Sigmoid colon (tissue), 7 donors: ENCODE measurements at regions of chr1 and their contacts with region 1.

Region 1: GRCh38 chr1:155050560-155051341 is at the start of gene ADAM15:
- DNase-seq: peak; percentile 93
- H3K4me3 ChIP-seq: peak within 1 kb of the TSS; percentile 57 to 85 (median 68)
- H3K27ac ChIP-seq: peak within 1 kb of the TSS; percentile 92 to 96 (median 92)
- H3K4me1 ChIP-seq: peaks cover 0 to 33% (median 22%) of the 10 kb centered on the region in 4 donors
- H3K27me3 ChIP-seq: no peaks in the 10 kb centered on the region
- CTCF ChIP-seq: peak; percentile 88 to 94 (median 94)
- EP300 ChIP-seq: no peak
- POLR2A ChIP-seq: peak in 1 of 2 donors; percentile 62
- total RNA-seq, gene ADAM15: 42.6 to 66.7 (median 53.1) TPM

Region 2: GRCh38 chr1:155084722-155085503 is 34.2 kb after region 1 on chr1:
- intact Hi-C with region 1: loop called (anchors 2 kb)
- DNase-seq: peak; percentile 96
- H3K4me3 ChIP-seq: peak overlapping the region; percentile 44 to 73 (median 68)
- H3K27ac ChIP-seq: peak overlapping the region; percentile 86 to 94 (median 89)
- H3K4me1 ChIP-seq: peaks cover 0 to 48% (median 46%) of the 10 kb centered on the region in 4 donors
- H3K27me3 ChIP-seq: peaks cover 38 to 46% (median 45%) of the 10 kb centered on the region in 3 donors
- CTCF ChIP-seq: peak; percentile 92 to 99 (median 96)
- EP300 ChIP-seq: peak in 1 of 4 donors; percentile 27
- POLR2A ChIP-seq: peak in 1 of 2 donors; percentile 42